ENCODE measurements at regions of chr14 and their contacts with region 1.

Region 1: GRCh38 chr14:82113710-82114109 is 580.1 kb upstream of the SEL1L start:
- DNase-seq: no peak
- H3K4me3 ChIP-seq: no peak overlapping the region
- H3K4me3 Mint-ChIP-seq: no peak overlapping the region
- H3K27ac Mint-ChIP-seq: no peak overlapping the region
- H3K4me1 ChIP-seq: no peaks in the 10 kb centered on the region
- H3K4me1 Mint-ChIP-seq: no peaks in the 10 kb centered on the region
- H3K27me3 ChIP-seq: no peaks in the 10 kb centered on the region
- H3K27me3 Mint-ChIP-seq: no peaks in the 10 kb centered on the region
- CTCF ChIP-seq: no peak

Region 2: GRCh38 chr14:81940651-81941050 is 173.1 kb before region 1 on chr14:
- CTCF ChIA-PET with region 1: no interaction called
- POLR2A ChIA-PET with region 1: no interaction called
- intact Hi-C with region 1: no loop called
- DNase-seq: no peak
- H3K4me3 ChIP-seq: no peak overlapping the region
- H3K4me3 Mint-ChIP-seq: no peak overlapping the region
- H3K27ac Mint-ChIP-seq: no peak overlapping the region
- H3K4me1 ChIP-seq: no peaks in the 10 kb centered on the region
- H3K4me1 Mint-ChIP-seq: no peaks in the 10 kb centered on the region
- H3K27me3 ChIP-seq: no peaks in the 10 kb centered on the region
- H3K27me3 Mint-ChIP-seq: peaks cover 2% of the 10 kb centered on the region
- CTCF ChIP-seq: no peak

Region 3: GRCh38 chr14:82084813-82085212 is 28.9 kb before region 1 on chr14:
- CTCF ChIA-PET with region 1: no interaction called
- POLR2A ChIA-PET with region 1: interaction called, 10 read pairs
- intact Hi-C with region 1: no loop called
- DNase-seq: no peak
- H3K4me3 ChIP-seq: no peak overlapping the region
- H3K4me3 Mint-ChIP-seq: no peak overlapping the region
- H3K27ac Mint-ChIP-seq: no peak overlapping the region
- H3K4me1 ChIP-seq: no peaks in the 10 kb centered on the region
- H3K4me1 Mint-ChIP-seq: no peaks in the 10 kb centered on the region
- H3K27me3 ChIP-seq: no peaks in the 10 kb centered on the region
- H3K27me3 Mint-ChIP-seq: peaks cover 5% of the 10 kb centered on the region
- CTCF ChIP-seq: no peak

Region 4: GRCh38 chr14:82366803-82367202 is 253.1 kb after region 1 on chr14:
- CTCF ChIA-PET with region 1: no interaction called
- POLR2A ChIA-PET with region 1: no interaction called
- intact Hi-C with region 1: loop called (anchors 2 kb)
- DNase-seq: peak in 1 of 2 experiments; percentile 26
- H3K4me3 ChIP-seq: no peak overlapping the region
- H3K4me3 Mint-ChIP-seq: no peak overlapping the region
- H3K27ac Mint-ChIP-seq: no peak overlapping the region
- H3K4me1 ChIP-seq: no peaks in the 10 kb centered on the region
- H3K4me1 Mint-ChIP-seq: no peaks in the 10 kb centered on the region
- H3K27me3 ChIP-seq: no peaks in the 10 kb centered on the region
- H3K27me3 Mint-ChIP-seq: no peaks in the 10 kb centered on the region
- CTCF ChIP-seq: peak; percentile 22 to 30